Activated CD4-positive, alpha-beta T cell treated with anti-CD3 and anti-CD28 coated beads for 36 hours (primary cell): ENCODE measurements at regions of chr16 and their contacts with region 1.

Region 1: GRCh38 chr16:23784811-23785447 is 30.1 kb downstream of the CHP2 start:
- DNase-seq: no peak
- ATAC-seq: peak; percentile 64
- H3K4me3 Mint-ChIP-seq: no peak overlapping the region
- H3K27ac Mint-ChIP-seq: no peak overlapping the region
- H3K4me1 Mint-ChIP-seq: no peaks in the 10 kb centered on the region
- H3K27me3 Mint-ChIP-seq: peaks cover 8% of the 10 kb centered on the region

Region 2: DNA sequence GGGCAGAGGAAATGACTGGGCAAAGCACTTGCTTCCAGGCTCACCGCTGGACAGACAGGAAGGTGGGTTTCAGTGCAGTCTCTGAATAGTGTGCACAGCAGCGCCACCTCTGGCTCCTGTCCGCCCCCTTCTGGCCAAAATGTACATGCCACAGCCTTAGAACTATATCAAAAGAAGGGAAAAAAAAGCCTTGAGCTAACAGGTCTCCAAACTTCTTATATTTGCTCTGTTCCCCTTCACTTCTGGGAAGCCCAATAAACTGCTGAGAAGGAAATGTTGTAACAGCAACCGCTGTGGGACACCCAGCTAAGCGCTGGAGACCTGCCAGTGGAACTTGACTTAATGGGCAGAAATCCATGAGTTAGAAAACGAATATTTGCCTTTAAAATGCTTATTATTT is 349.4 kb before region 1 on chr16:
- CTCF ChIA-PET with region 1: no interaction called
- POLR2A ChIA-PET with region 1: no interaction called
- intact Hi-C with region 1: no loop called
- DNase-seq: peak; percentile 81
- ATAC-seq: peak; percentile 96
- H3K4me3 Mint-ChIP-seq: no peak overlapping the region
- H3K27ac Mint-ChIP-seq: no peak overlapping the region
- H3K4me1 Mint-ChIP-seq: no peaks in the 10 kb centered on the region
- H3K27me3 Mint-ChIP-seq: no peaks in the 10 kb centered on the region

Region 3: GRCh38 chr16:23959072-23959751 is 174.3 kb after region 1 on chr16:
- CTCF ChIA-PET with region 1: no interaction called
- POLR2A ChIA-PET with region 1: no interaction called
- intact Hi-C with region 1: no loop called
- DNase-seq: no peak
- ATAC-seq: peak; percentile 49
- H3K4me3 Mint-ChIP-seq: peak overlapping the region; percentile 54
- H3K27ac Mint-ChIP-seq: peak overlapping the region; percentile 79
- H3K4me1 Mint-ChIP-seq: peaks cover 77% of the 10 kb centered on the region
- H3K27me3 Mint-ChIP-seq: no peaks in the 10 kb centered on the region

Region 4: GRCh38 chr16:24493859-24494258 is 708.9 kb after region 1 on chr16:
- CTCF ChIA-PET with region 1: no interaction called
- POLR2A ChIA-PET with region 1: no interaction called
- intact Hi-C with region 1: loop called in 1 of 2 experiments (anchors 5 kb)
- DNase-seq: no peak
- ATAC-seq: no peak
- H3K4me3 Mint-ChIP-seq: no peak overlapping the region
- H3K27ac Mint-ChIP-seq: no peak overlapping the region
- H3K4me1 Mint-ChIP-seq: no peaks in the 10 kb centered on the region
- H3K27me3 Mint-ChIP-seq: peaks cover 7% of the 10 kb centered on the region